Thyroid gland (tissue), 4 donors: ENCODE measurements at regions of chr2 and their contacts with region 1.

Region 1: DNA sequence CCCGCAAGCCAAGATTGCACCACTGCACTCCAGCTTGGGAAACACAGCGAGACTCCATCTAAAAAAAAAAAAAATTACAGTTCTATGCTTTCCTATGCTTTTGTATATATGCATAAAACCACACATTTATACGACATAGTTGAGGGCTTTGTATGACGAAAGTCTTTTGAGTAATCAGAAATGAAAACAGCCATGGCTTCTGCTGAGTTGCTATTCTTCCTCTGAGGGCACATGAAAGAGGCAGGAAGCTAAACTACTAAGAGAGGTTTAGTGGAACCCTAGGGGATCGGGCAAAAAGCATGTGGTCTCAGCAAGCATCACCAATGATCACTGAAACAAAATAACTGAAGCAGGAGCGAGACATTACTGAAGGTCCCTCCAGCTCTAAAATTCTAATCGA is 99.6 kb downstream of the ZAP70 start:
- DNase-seq: no peak
- H3K4me3 ChIP-seq: no peak overlapping the region
- H3K27ac ChIP-seq: no peak overlapping the region
- H3K4me1 ChIP-seq: no peaks in the 10 kb centered on the region
- H3K27me3 ChIP-seq: no peaks in the 10 kb centered on the region
- CTCF ChIP-seq: no peak
- POLR2A ChIP-seq: no peak

Region 2: GRCh38 chr2:97911206-97911921 is 98.4 kb after region 1 on chr2:
- intact Hi-C with region 1: no loop called
- DNase-seq: no peak
- H3K4me3 ChIP-seq: no peak overlapping the region
- H3K27ac ChIP-seq: no peak overlapping the region
- H3K4me1 ChIP-seq: no peaks in the 10 kb centered on the region
- H3K27me3 ChIP-seq: no peaks in the 10 kb centered on the region
- CTCF ChIP-seq: no peak
- POLR2A ChIP-seq: no peak

Region 3: DNA sequence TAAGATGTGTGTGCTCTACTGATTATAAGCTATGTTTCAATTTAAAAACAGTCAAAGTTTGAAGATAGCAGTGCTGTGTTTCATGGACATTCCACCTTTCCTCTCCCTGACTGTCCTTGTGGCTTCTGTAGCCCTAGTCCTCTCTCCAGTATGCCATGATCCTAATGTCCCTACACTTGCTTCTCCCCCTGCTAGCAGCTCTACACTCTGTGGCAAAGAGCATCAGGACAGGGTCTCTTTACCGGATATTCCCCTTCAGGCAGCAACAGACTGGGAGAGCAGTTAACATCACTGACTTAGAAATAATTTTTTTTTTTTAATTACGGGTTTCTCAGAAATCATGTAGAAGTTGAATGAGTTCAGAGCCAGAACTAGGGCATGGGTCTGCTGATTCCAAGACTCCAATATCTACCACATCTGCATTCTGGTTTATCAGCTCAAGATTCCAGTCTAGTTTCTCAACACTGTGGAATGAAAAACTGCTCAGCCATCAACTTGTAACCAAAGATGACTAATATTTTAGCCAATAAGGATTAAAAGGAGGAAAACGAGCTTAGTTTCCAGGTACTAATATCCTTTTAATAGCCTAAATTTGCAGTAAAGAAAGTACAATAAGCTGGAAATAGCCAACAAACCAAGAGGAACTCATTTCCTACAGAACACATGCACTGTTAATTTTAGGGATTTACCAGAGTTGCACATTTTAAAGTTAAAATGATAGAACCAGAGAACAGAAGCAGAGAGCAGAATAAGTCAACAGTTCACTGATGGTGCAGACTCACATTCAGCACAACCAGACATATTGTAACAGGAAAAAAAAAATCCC is 137.6 kb after region 1 on chr2:
- intact Hi-C with region 1: no loop called
- DNase-seq: no peak
- H3K4me3 ChIP-seq: no peak overlapping the region
- H3K27ac ChIP-seq: no peak overlapping the region
- H3K4me1 ChIP-seq: peaks cover 0 to 9% of the 10 kb centered on the region in 2 donors
- H3K27me3 ChIP-seq: no peaks in the 10 kb centered on the region
- CTCF ChIP-seq: no peak
- POLR2A ChIP-seq: no peak

Region 4: DNA sequence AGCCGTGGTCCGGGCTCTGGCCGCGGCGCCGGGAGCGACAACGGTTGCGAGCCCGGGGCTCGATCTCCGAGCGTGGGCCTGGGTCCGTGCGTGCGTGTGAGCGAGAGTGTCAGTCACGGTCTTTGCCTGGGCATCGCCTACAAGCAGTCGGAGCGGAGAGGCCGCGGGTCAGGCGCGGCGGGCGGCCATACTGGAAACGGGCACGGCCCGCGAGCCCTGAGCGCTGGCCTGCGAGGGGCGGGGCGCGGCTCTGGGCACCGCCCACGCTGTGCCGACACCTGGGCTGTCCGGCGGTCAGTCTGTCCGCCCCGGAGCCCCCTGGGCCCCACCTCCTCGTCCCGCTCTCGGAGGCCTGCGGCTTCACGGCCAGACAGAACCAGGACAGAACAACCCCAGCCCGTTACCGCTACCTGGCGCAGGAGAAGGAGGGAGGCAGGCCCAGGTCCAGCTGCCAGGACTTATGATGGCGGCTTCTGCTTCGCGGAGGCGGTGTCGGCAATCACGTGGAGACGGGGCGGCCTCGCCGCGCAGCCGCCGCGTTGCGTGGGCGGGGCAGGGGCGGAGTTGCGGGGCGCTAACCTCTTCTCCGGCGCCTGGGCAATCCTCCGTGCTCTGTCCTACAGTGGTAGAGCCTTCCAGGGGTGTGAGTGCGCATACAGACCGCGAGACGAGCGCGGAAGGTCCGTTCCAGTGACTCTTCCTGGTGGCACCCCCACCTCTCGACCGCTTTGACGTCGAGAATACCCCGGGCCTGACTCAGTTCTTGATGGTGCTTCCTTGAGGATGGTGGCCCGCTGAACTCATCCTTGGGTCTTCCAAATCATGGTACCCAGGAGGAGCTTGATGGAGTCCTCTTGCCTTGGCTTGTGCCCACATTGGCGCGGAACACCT is 183.0 kb after region 1 on chr2 and contains the start of gene TMEM131:
- intact Hi-C with region 1: loop called (anchors 10 kb)
- DNase-seq: peak; percentile 93 to 94
- H3K4me3 ChIP-seq: peak within 1 kb of the TSS; percentile 10 to 61 (median 18)
- H3K27ac ChIP-seq: peak within 1 kb of the TSS; percentile 74 to 95 (median 93)
- H3K4me1 ChIP-seq: peaks cover 14 to 17% of the 10 kb centered on the region in 2 donors
- H3K27me3 ChIP-seq: no peaks in the 10 kb centered on the region
- CTCF ChIP-seq: no peak
- POLR2A ChIP-seq: peak; percentile 36 to 94
- total RNA-seq, gene TMEM131: 28.6 to 47.0 (median 35.2) TPM